GM18951 (cell line): ENCODE measurements at regions of chr13 and their contacts with region 1.

Region 1: DNA sequence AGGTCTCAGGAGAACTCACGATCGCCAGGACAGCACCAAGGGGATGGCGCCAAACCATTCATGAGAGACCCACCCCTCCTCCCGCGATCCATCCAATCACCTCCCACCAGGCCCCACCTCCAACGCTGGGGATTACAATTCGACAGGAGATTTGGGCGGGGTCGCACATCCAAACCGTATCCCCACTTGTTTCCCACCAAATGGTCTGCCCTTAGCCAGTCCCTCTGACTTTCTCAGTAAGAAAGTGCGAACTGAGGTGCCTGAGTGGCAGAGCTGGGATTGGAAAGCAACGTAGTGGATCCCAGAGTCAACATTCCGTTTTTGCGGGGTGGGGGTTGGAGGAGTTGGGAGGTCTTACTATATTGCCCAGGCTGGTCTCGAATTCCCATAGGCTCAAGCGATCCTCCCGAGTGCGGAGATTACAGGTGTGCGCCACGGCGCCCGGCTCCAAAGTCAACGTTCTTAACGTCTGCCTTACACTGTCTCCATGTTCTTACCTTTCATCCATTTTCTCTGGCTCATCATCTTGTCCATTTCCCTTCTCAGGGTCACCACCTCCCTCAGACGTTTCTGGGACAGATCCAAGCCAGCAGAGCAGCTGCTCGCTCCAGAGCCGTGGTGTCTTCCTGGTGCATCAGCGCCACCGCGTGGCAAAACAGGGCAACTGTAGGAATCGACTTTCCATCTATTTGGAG is 102.7 kb upstream of the ABCC4 start:
- POLR2A ChIP-seq: no peak

Region 2: GRCh38 chr13:94674609-94675348 is 729.2 kb before region 1 on chr13:
- in situ Hi-C with region 1: loop called (anchors 25 kb)
- POLR2A ChIP-seq: no peak